ENCODE measurements at regions of chr18 and their contacts with region 1.

Region 1: GRCh38 chr18:58615140-58616132 is 13.5 kb downstream of the ALPK2 start:
- DNase-seq: peak in 8 of 9 donors; percentile 15 to 65 (median 50)
- ATAC-seq: peak; percentile 92
- H3K4me3 ChIP-seq: peak overlapping the region; percentile 11
- H3K4me3 Mint-ChIP-seq: peak overlapping the region; percentile 67 to 88 (median 81)
- H3K27ac ChIP-seq: peak overlapping the region; percentile 65
- H3K27ac Mint-ChIP-seq: peak overlapping the region; percentile 85 to 98 (median 95)
- H3K4me1 ChIP-seq: peaks cover 23 to 36% of the 10 kb centered on the region in 2 donors
- H3K4me1 Mint-ChIP-seq: peaks cover 32 to 58% (median 48%) of the 10 kb centered on the region in 7 donors
- H3K27me3 ChIP-seq: no peaks in the 10 kb centered on the region
- H3K27me3 Mint-ChIP-seq: peaks cover 0 to 29% (median 0%) of the 10 kb centered on the region in 5 donors

Region 2: DNA sequence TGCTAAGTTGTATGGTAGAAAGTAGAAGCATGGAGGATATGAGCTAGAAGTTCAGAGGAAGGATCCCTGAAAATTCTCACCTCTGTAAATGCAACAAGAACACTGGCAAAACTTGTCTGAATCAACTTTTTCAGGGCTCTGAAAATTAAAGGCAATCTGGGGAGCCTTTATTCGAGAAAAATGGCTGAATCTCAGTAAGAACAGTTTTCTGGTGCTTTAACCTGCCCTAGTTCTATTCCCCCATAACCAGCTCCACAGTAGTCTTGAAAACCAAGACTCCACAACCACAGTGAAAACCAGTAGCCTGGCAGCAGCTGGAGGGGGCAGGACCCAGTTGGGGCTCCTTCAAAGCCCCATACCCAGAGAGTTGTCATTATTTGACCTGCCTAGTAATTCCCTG is 29.2 kb before region 1 on chr18:
- CTCF ChIA-PET with region 1: no interaction called
- POLR2A ChIA-PET with region 1: no interaction called
- intact Hi-C with region 1: no loop called
- DNase-seq: no peak
- ATAC-seq: no peak
- H3K4me3 ChIP-seq: no peak overlapping the region
- H3K4me3 Mint-ChIP-seq: no peak overlapping the region
- H3K27ac ChIP-seq: no peak overlapping the region
- H3K27ac Mint-ChIP-seq: no peak overlapping the region
- H3K4me1 ChIP-seq: no peaks in the 10 kb centered on the region
- H3K4me1 Mint-ChIP-seq: peaks cover 0 to 11% (median 7%) of the 10 kb centered on the region in 7 donors
- H3K27me3 ChIP-seq: no peaks in the 10 kb centered on the region
- H3K27me3 Mint-ChIP-seq: peaks cover 0 to 29% (median 0%) of the 10 kb centered on the region in 5 donors

Region 3: DNA sequence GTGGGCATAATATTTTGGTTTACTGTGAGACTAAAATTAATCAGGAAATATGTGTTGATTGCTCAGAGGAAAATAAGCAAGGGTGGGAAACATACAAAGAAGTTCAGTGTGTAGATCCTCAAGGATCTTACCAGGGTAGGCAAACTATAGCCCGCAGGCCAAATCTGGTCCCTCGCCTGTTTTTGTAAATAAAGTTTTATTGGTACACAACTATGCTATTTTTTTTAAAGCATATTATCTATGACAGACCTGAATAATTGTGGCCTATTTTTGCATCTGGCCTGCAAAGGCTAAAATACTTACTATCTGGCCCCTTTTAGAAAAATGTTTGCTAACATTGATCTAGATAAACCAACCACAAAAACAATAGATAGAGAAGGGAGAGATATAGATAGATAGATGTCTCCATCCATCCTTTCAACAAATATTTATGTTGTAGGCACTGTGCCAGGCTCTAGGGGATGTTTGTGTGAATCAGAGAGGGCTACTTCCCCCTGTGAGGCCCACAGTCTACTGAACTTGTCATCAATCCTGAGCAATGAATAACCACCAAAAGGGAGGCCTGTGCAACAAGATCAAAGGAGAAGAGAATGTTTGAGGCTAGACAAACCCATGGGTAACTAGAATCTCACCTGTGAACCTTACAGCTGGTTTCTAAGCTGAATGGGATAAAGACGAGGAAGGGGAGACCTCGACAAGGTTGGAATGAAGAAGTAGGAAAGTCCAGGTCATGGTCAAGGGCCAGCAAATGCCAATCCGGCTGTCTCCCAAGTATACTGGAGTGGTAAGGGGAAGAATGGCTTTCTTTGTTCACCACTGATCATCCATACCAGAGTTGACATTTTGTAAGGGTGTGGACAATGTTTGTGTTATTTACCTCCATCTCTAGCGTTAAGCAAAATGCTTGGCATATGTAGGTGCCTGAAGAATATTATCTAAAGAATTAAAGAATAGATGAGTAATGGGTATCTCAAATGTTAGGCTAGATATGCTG is 10.1 kb before region 1 on chr18:
- CTCF ChIA-PET with region 1: no interaction called
- POLR2A ChIA-PET with region 1: interaction called, 7 read pairs
- intact Hi-C with region 1: loop called in 1 of 2 experiments (anchors 1 kb)
- DNase-seq: peak in 6 of 9 donors; percentile 12 to 54 (median 35)
- ATAC-seq: peak; percentile 74
- H3K4me3 ChIP-seq: no peak overlapping the region
- H3K4me3 Mint-ChIP-seq: peak overlapping the region in 9 of 10 donors; percentile 14 to 76 (median 46)
- H3K27ac ChIP-seq: no peak overlapping the region
- H3K27ac Mint-ChIP-seq: peak overlapping the region in 8 of 9 donors; percentile 1 to 79 (median 50)
- H3K4me1 ChIP-seq: peaks cover 0 to 48% of the 10 kb centered on the region in 2 donors
- H3K4me1 Mint-ChIP-seq: peaks cover 25 to 62% (median 51%) of the 10 kb centered on the region in 7 donors
- H3K27me3 ChIP-seq: no peaks in the 10 kb centered on the region
- H3K27me3 Mint-ChIP-seq: peaks cover 0 to 8% (median 0%) of the 10 kb centered on the region in 5 donors

Region 4: GRCh38 chr18:58661423-58661822 is 46.0 kb after region 1 on chr18:
- CTCF ChIA-PET with region 1: no interaction called
- POLR2A ChIA-PET with region 1: interaction called, 6 read pairs
- intact Hi-C with region 1: loop called (anchors 1 kb)
- DNase-seq: no peak
- ATAC-seq: no peak
- H3K4me3 ChIP-seq: no peak overlapping the region
- H3K4me3 Mint-ChIP-seq: no peak overlapping the region
- H3K27ac ChIP-seq: no peak overlapping the region
- H3K27ac Mint-ChIP-seq: peak overlapping the region in 1 of 9 donors; percentile 22
- H3K4me1 ChIP-seq: peaks cover 31 to 33% of the 10 kb centered on the region in 2 donors
- H3K4me1 Mint-ChIP-seq: peaks cover 38 to 68% (median 62%) of the 10 kb centered on the region in 7 donors
- H3K27me3 ChIP-seq: no peaks in the 10 kb centered on the region
- H3K27me3 Mint-ChIP-seq: no peaks in the 10 kb centered on the region

Region 5: GRCh38 chr18:58716060-58716756 is 100.8 kb after region 1 on chr18:
- CTCF ChIA-PET with region 1: no interaction called
- POLR2A ChIA-PET with region 1: no interaction called
- intact Hi-C with region 1: loop called in 1 of 2 experiments (anchors 2 kb)
- DNase-seq: peak in 7 of 9 donors; percentile 19 to 59 (median 44)
- ATAC-seq: peak; percentile 86
- H3K4me3 ChIP-seq: no peak overlapping the region
- H3K4me3 Mint-ChIP-seq: peak overlapping the region; percentile 63 to 92 (median 80)
- H3K27ac ChIP-seq: peak overlapping the region; percentile 44
- H3K27ac Mint-ChIP-seq: peak overlapping the region; percentile 77 to 94 (median 87)
- H3K4me1 ChIP-seq: peaks cover 25 to 32% of the 10 kb centered on the region in 2 donors
- H3K4me1 Mint-ChIP-seq: peaks cover 38 to 92% (median 76%) of the 10 kb centered on the region in 7 donors
- H3K27me3 ChIP-seq: no peaks in the 10 kb centered on the region
- H3K27me3 Mint-ChIP-seq: no peaks in the 10 kb centered on the region

Region 6: DNA sequence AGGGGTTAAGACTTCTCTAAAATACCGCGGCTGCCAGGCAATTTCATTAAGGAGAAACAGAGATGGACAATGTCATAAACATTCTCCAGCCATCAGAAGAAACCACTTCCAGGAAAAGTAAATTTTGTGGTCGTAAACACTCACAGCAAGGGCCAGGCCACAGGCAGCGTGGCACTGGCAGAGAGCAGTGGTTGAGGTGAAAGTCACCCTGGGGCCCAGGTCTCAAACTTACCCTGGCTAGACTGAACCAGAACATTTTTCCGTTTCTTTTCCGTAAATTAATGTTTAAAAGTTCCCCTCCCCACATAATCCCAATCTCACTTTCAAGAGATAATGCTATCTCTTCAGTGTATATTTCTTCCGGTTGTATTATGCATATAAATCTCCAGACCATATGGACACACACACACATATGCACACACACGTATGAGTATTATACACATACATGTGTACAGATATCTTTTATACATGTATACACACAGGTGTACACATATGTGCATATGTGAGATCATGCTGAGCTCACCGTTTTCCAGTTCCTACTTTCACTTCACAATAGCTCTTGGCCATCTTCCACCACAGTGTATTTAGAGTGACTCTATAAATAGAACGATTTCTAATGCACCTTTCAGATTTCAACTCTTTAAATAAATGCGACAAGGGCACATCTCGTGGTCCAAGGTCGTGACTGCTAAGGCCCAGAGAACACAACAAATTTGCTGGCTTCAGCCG is 146.0 kb after region 1 on chr18:
- CTCF ChIA-PET with region 1: interaction called, 7 read pairs
- POLR2A ChIA-PET with region 1: no interaction called
- intact Hi-C with region 1: loop called (anchors 1 to 5 kb)
- DNase-seq: peak in 1 of 9 donors; percentile 4
- ATAC-seq: no peak
- H3K4me3 ChIP-seq: no peak overlapping the region
- H3K4me3 Mint-ChIP-seq: peak overlapping the region in 3 of 10 donors; percentile 0 to 69 (median 36)
- H3K27ac ChIP-seq: no peak overlapping the region
- H3K27ac Mint-ChIP-seq: peak overlapping the region in 1 of 9 donors; percentile 65
- H3K4me1 ChIP-seq: peaks cover 6 to 15% of the 10 kb centered on the region in 2 donors
- H3K4me1 Mint-ChIP-seq: peaks cover 16 to 56% (median 45%) of the 10 kb centered on the region in 7 donors
- H3K27me3 ChIP-seq: peaks cover 0 to 6% of the 10 kb centered on the region in 2 donors
- H3K27me3 Mint-ChIP-seq: peaks cover 8 to 36% (median 17%) of the 10 kb centered on the region in 5 donors

Region 7: DNA sequence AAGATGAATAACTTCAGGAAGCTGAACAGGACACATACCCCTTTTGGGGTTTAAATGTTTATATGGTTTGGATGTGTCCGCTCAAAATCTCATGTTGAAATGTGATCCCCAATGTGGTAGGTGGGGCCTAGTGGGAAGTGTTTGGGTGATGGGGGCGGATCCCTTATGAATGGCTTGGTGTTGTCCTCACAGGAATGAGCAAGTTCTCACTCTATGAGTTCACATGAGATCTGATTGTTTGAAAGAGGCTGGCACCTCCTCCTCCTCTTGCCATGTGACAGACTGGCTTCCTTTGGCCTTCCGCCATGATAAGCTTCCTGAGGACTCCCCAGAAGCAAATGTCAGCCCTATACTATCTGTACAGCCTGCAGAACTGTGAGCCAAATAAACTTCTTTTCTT is 160.6 kb after region 1 on chr18:
- CTCF ChIA-PET with region 1: no interaction called
- POLR2A ChIA-PET with region 1: no interaction called
- intact Hi-C with region 1: no loop called
- DNase-seq: no peak
- ATAC-seq: no peak
- H3K4me3 ChIP-seq: no peak overlapping the region
- H3K4me3 Mint-ChIP-seq: no peak overlapping the region
- H3K27ac ChIP-seq: no peak overlapping the region
- H3K27ac Mint-ChIP-seq: peak overlapping the region in 1 of 9 donors; percentile 45
- H3K4me1 ChIP-seq: no peaks in the 10 kb centered on the region
- H3K4me1 Mint-ChIP-seq: peaks cover 0 to 1% (median 0%) of the 10 kb centered on the region in 7 donors
- H3K27me3 ChIP-seq: no peaks in the 10 kb centered on the region
- H3K27me3 Mint-ChIP-seq: peaks cover 5 to 24% (median 22%) of the 10 kb centered on the region in 5 donors